ENCODE measurements at regions of chr5 and their contacts with region 1.

Region 1: DNA sequence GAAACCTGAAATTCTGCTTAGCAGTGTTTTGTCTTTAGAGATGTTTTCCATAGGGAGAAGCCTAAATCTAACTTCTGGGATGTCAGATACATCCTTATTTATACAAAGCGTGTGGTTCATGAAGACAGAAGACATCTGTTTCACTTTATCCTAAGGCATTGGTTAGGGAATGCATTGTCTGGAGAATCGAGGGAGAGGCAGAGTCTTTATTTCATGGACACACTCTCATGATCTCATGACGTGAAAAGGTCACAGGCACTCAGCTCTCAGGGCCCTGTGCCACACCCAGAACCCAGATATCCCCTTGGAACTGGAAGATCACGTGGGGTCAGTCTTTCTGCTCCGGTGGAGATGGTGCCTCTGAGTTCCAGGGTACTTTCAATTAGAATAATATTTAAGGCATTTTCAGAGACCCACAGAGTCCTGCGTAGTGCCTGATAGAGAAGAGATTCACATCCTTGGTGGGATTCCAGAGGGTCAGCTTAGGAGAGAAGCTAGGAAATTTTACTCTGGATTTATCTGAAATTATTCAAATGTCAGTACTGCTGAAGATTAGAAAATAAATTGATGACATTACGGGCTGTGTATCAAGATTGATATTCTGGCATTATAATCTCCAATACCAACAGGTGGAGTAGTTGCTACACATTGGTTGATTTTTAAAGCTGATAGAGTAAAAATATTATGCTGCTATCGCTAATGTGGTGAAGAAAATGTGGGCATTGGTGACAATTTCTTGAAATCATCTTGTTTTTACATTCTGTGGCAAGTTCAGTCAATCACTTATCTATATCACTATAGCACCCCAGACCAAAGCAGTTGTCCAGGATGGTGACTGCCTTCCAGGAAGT is 378.3 kb downstream of the MTRR start:
- DNase-seq: peak; percentile 58
- ATAC-seq: peak; percentile 31; the same call in 1 of the 2 replicates
- H3K4me3 ChIP-seq: peak overlapping the region; percentile 31
- H3K27ac ChIP-seq: no peak overlapping the region
- H3K4me1 ChIP-seq: peaks cover 3% of the 10 kb centered on the region; the same call in 1 of the 2 replicates
- H3K27me3 ChIP-seq: no peaks in the 10 kb centered on the region
- CTCF ChIP-seq: peak; percentile 95

Region 2: GRCh38 chr5:7927466-7928375 is 319.6 kb before region 1 on chr5:
- CTCF ChIA-PET with region 1: no interaction called
- POLR2A ChIA-PET with region 1: no interaction called
- intact Hi-C with region 1: loop called (anchors 5 kb)
- DNase-seq: peak; percentile 86
- ATAC-seq: peak; percentile 97
- H3K4me3 ChIP-seq: no peak overlapping the region
- H3K27ac ChIP-seq: no peak overlapping the region
- H3K4me1 ChIP-seq: no peaks in the 10 kb centered on the region
- H3K27me3 ChIP-seq: peaks cover 22% of the 10 kb centered on the region; the same call in 1 of the 2 replicates
- CTCF ChIP-seq: peak; percentile 98

Region 3: DNA sequence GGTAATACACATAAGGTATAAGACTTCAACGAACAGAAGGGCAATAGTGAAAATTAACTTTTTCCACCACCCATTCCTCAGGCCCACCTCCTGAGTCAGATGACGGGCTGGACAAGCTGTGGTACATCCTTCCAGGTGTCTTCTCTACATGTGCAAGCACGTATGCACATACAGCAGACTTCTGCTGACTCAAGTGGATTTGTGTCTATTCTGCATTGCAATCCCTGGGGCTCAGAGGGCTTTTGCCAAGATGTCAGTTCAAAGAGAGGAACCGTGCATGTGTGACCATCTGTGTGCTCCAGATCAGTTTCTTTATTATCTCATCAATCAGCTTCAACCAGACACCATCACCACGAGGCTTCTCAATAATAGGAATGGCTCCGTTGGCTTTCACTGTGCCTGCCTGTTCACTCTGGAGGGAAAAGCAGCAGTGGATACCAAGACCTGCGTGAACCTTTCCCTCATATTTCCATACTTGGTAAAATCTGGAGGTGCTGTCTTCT is 89.9 kb before region 1 on chr5:
- CTCF ChIA-PET with region 1: no interaction called
- POLR2A ChIA-PET with region 1: no interaction called
- intact Hi-C with region 1: no loop called
- DNase-seq: no peak
- ATAC-seq: no peak
- H3K4me3 ChIP-seq: no peak overlapping the region
- H3K27ac ChIP-seq: no peak overlapping the region
- H3K4me1 ChIP-seq: no peaks in the 10 kb centered on the region
- H3K27me3 ChIP-seq: peaks cover 10% of the 10 kb centered on the region; the same call in 1 of the 2 replicates
- CTCF ChIP-seq: no peak

Region 4: GRCh38 chr5:8280711-8281363 is 33.6 kb after region 1 on chr5:
- CTCF ChIA-PET with region 1: no interaction called
- POLR2A ChIA-PET with region 1: no interaction called
- intact Hi-C with region 1: no loop called
- DNase-seq: no peak
- ATAC-seq: peak; percentile 69
- H3K4me3 ChIP-seq: no peak overlapping the region
- H3K27ac ChIP-seq: no peak overlapping the region
- H3K4me1 ChIP-seq: no peaks in the 10 kb centered on the region
- H3K27me3 ChIP-seq: no peaks in the 10 kb centered on the region
- CTCF ChIP-seq: no peak

Region 5: DNA sequence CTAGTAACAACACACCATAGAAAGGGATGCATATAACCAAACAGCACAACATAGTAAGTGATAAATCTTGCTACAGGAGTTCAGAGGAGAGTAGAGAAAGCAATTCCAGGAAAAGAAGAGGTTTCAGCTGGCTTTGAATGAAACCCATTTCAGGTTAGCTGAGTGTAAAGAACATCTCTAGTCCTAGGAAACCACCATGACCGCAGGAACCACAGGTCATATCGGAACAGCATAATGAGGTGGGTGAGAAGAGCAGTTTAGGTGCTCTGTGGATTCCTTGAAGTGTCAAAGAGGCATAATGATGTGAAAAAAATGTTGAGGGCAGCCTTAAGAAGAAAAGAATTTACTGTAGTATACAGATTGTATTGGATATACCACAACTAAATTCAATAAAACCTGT is 129.2 kb after region 1 on chr5:
- CTCF ChIA-PET with region 1: no interaction called
- POLR2A ChIA-PET with region 1: no interaction called
- intact Hi-C with region 1: no loop called
- DNase-seq: no peak
- ATAC-seq: no peak
- H3K4me3 ChIP-seq: no peak overlapping the region
- H3K27ac ChIP-seq: no peak overlapping the region
- H3K4me1 ChIP-seq: no peaks in the 10 kb centered on the region; the same call in 1 of the 2 replicates
- H3K27me3 ChIP-seq: no peaks in the 10 kb centered on the region
- CTCF ChIP-seq: no peak

Region 6: GRCh38 chr5:8394962-8395361 is 147.7 kb after region 1 on chr5:
- CTCF ChIA-PET with region 1: no interaction called
- POLR2A ChIA-PET with region 1: no interaction called
- intact Hi-C with region 1: loop called (anchors 1 kb)
- DNase-seq: peak; percentile 71
- ATAC-seq: peak; percentile 56; the same call in 1 of the 2 replicates
- H3K4me3 ChIP-seq: no peak overlapping the region
- H3K27ac ChIP-seq: no peak overlapping the region
- H3K4me1 ChIP-seq: peaks cover 15% of the 10 kb centered on the region
- H3K27me3 ChIP-seq: no peaks in the 10 kb centered on the region
- CTCF ChIP-seq: peak; percentile 78

Region 7: DNA sequence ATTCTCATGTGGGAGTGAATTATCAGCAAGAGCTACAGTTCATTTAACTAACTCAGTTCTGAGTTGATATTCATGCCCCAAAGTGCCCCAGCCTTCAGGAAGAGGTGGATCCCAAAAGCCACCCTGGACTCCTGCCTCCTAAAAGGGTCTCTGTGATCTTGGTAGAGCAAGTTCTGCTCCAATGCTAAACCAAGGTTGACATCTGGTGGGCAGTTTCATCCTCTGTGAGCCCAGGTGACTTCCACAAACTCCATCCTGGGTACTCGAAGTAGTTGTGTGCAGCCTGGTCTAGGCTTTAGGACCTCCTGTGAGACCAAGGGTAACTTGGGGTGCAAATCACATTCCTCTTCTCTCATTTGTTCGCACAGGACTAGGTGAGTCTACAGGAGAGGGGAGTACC is 438.4 kb after region 1 on chr5:
- CTCF ChIA-PET with region 1: no interaction called
- POLR2A ChIA-PET with region 1: no interaction called
- intact Hi-C with region 1: loop called (anchors 1 kb)
- DNase-seq: peak; percentile 45
- ATAC-seq: peak; percentile 56
- H3K4me3 ChIP-seq: no peak overlapping the region
- H3K27ac ChIP-seq: no peak overlapping the region
- H3K4me1 ChIP-seq: no peaks in the 10 kb centered on the region
- H3K27me3 ChIP-seq: no peaks in the 10 kb centered on the region
- CTCF ChIP-seq: peak; percentile 72

Region 8: DNA sequence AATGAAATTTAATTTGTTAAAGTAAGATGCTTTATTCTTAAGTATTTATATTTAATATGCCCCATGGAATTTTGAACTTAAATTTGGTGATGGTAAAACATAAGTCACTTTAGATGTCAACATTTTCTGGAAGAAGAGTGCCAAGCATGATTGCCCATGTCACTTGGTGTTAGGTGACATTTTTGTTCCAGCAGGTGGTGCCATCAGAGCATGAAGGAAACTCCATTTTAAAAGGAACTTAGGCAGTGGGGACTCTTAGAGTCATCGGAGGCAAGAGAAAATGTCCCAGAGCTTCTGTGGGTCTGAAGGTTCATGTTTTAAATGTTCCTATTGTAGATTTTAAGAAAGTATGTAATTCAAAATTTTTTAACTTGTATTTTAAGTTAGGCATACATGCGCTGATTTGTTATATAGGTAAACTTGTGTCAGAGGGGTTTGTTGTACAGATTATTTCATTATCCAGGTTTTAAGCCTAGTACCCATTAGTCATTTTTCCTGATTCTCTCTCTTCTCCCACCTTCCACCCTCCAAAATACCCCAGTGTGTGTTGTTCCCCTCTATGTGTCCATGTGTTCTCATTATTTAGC is 509.3 kb after region 1 on chr5:
- CTCF ChIA-PET with region 1: no interaction called
- POLR2A ChIA-PET with region 1: no interaction called
- intact Hi-C with region 1: loop called (anchors 10 kb)
- DNase-seq: peak; percentile 87
- ATAC-seq: peak; percentile 85
- H3K4me3 ChIP-seq: no peak overlapping the region
- H3K27ac ChIP-seq: no peak overlapping the region
- H3K4me1 ChIP-seq: no peaks in the 10 kb centered on the region
- H3K27me3 ChIP-seq: no peaks in the 10 kb centered on the region
- CTCF ChIP-seq: peak; percentile 96